SK-N-SH (cell line): ENCODE measurements at regions of chr19 and their contacts with region 1.

Region 1: DNA sequence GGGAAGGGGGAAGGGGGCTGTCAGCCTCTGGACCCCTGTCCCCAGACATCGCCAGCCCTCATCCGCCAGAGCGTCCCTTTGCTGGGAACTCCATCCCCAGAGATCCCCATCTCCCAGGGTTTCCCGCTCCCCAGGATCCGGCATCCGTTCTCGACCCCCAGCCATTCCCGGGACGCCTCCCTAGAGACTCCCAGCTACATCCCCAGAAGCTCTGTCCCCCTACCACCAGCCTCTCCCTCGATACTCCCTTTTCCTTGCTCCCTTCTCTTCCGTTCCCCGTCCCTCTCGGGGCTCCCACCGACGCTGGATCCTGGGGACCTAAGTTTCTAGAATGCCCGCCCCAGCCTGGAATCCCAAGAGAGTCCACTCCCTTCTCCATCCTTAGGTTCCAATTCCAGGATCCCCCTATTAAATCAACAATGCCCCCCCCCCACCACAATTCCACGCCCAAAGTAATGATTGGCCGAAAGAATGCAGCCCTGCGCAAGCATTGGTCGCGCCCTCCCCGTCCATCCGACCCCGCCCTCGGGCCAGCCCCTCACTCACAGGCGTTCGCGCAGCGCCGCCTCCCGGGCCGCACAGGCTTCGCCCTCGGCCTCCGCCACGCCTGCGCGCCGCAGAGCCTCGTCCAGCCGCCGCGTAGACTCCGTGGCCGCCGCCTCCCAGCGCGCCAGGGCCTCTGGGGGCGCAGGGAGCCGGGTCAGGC is 3.2 kb downstream of the CCDC194 start:
- DNase-seq: peak; percentile 99
- H3K4me3 ChIP-seq: peak overlapping the region; percentile 59 to 65
- H3K27ac ChIP-seq: peak overlapping the region in 1 of 2 experiments; percentile 63; a peak in 2 of 4 replicates
- H3K4me1 ChIP-seq: peaks cover 0 to 7% of the 10 kb centered on the region in 2 experiments; a peak in 1 of 4 replicates
- H3K27me3 ChIP-seq: no peaks in the 10 kb centered on the region
- CTCF ChIP-seq: peak; percentile 62
- EP300 ChIP-seq: no peak
- RAD21 ChIP-seq: peak; percentile 56

Region 2: GRCh38 chr19:17260842-17261325 is 129.9 kb before region 1 on chr19:
- CTCF ChIA-PET with region 1: no interaction called
- POLR2A ChIA-PET with region 1: no interaction called
- DNase-seq: peak; percentile 87
- H3K4me3 ChIP-seq: no peak overlapping the region
- H3K27ac ChIP-seq: no peak overlapping the region
- H3K4me1 ChIP-seq: no peaks in the 10 kb centered on the region
- H3K27me3 ChIP-seq: no peaks in the 10 kb centered on the region
- CTCF ChIP-seq: peak; percentile 71
- EP300 ChIP-seq: no peak
- RAD21 ChIP-seq: peak; percentile 41

Region 3: DNA sequence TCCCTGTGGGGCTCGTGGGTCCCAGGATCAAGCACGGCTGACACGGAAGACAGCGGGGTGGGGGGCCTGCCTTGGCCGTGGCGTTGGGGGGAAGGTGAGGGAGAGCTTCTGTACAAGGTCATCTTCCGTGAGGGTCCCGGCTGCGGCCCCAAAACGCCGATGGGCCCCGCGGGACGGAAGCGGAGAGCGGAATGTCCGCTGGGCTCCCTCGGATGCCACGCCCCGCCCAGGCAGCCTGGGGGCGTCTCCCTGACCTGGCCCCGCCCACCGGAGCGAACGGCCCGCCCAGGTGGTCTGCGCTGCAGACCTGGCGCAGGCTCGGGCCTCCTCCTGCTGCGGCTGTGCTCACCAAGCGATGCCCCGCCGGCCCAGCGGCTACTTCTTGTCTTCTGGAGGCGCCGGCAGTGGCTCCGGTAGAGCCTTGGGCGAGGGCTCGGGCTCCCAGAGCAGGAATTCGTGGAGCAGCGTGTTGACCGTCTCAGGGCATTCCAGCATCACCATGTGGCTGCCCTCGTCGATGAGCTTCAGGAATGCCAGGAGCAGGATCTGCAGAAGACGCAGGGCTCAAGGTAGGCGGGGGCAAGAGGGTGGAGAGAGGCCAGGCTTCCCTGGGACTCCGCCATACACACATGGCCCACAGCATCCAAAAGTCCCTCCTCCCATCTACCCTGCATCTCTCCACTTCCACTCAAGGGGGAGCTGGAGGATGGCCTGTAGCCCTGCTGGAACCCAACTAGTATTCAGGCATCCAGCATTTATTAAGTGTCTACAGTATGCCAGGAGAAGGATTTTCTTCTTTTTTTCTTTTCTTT is 98.3 kb before region 1 on chr19:
- CTCF ChIA-PET with region 1: interaction called, 13 read pairs
- POLR2A ChIA-PET with region 1: no interaction called
- DNase-seq: peak; percentile 93
- H3K4me3 ChIP-seq: peak overlapping the region; percentile 46 to 63
- H3K27ac ChIP-seq: peak overlapping the region; percentile 38 to 82; a peak in 3 of 4 replicates
- H3K4me1 ChIP-seq: peaks cover 0 to 8% of the 10 kb centered on the region in 2 experiments; a peak in 1 of 4 replicates
- H3K27me3 ChIP-seq: no peaks in the 10 kb centered on the region
- CTCF ChIP-seq: peak; percentile 67
- EP300 ChIP-seq: no peak
- RAD21 ChIP-seq: peak; percentile 80

Region 4: DNA sequence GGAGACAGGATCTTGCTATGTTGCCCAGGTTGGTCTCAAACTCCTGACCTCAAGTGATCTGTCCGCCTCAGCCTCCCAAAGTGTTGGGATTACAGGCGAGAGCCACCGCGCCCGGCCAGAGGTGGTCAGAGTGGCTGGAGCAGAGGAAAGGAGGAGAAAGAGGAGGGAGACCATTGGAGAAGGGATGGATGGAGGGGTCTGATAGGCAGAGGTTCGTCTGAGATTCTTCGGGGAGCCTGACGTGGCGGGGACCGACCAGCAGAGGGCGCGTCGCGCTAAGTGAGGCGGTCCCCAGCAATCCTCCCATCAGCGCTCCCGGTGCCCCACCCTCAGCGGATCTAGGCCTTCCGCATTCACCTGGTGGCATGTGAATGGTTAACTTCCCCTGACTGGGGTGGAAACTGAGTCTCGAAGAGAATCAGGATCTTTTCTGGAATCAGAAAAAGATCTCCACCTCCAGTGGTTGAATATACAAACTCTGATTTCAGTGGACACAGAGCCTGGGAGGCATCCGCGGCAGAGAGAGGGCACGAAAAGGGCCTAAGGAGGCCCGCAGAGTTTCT is 44.6 kb before region 1 on chr19:
- CTCF ChIA-PET with region 1: interaction called, 80 read pairs
- POLR2A ChIA-PET with region 1: no interaction called
- DNase-seq: peak; percentile 89
- H3K4me3 ChIP-seq: no peak overlapping the region
- H3K27ac ChIP-seq: no peak overlapping the region
- H3K4me1 ChIP-seq: peaks cover 5 to 6% of the 10 kb centered on the region in 2 experiments; a peak in 1 of 4 replicates
- H3K27me3 ChIP-seq: no peaks in the 10 kb centered on the region
- CTCF ChIP-seq: peak; percentile 84
- EP300 ChIP-seq: no peak
- RAD21 ChIP-seq: peak; percentile 84

Region 5: DNA sequence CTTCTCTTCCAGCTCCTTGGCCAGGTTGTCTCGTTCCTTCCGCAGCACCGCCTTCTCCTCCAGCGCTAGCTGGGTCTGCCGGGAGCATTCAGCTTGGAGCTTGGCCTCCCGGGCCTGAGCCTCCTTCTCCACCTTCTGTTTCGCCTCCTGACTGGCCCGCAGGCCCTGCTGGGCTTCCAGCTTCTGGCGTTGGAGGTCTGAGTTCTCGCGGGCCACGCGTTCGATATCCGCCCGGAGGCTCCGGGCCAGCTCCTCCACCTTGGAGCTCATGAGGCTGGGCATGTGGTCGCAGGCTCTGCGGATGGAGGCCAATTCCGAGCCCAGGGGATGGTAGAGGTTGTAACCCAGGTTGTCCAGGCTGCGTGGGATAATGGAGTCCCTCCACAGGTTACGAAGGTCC is 25.5 kb before region 1 on chr19:
- CTCF ChIA-PET with region 1: interaction called, 14 read pairs
- POLR2A ChIA-PET with region 1: no interaction called
- DNase-seq: no peak
- H3K4me3 ChIP-seq: no peak overlapping the region
- H3K27ac ChIP-seq: no peak overlapping the region
- H3K4me1 ChIP-seq: no peaks in the 10 kb centered on the region
- H3K27me3 ChIP-seq: no peaks in the 10 kb centered on the region
- CTCF ChIP-seq: no peak
- EP300 ChIP-seq: no peak
- RAD21 ChIP-seq: no peak

Region 6: GRCh38 chr19:17411801-17412200 is 21.0 kb after region 1 on chr19:
- CTCF ChIA-PET with region 1: interaction called, 12 read pairs
- POLR2A ChIA-PET with region 1: no interaction called
- DNase-seq: peak; percentile 9
- H3K4me3 ChIP-seq: no peak overlapping the region
- H3K27ac ChIP-seq: no peak overlapping the region
- H3K4me1 ChIP-seq: peaks cover 0 to 7% of the 10 kb centered on the region in 2 experiments; a peak in 1 of 4 replicates
- H3K27me3 ChIP-seq: no peaks in the 10 kb centered on the region
- CTCF ChIP-seq: no peak
- EP300 ChIP-seq: no peak
- RAD21 ChIP-seq: no peak